ENCODE measurements at regions of chr16 and their contacts with region 1.

Region 1: DNA sequence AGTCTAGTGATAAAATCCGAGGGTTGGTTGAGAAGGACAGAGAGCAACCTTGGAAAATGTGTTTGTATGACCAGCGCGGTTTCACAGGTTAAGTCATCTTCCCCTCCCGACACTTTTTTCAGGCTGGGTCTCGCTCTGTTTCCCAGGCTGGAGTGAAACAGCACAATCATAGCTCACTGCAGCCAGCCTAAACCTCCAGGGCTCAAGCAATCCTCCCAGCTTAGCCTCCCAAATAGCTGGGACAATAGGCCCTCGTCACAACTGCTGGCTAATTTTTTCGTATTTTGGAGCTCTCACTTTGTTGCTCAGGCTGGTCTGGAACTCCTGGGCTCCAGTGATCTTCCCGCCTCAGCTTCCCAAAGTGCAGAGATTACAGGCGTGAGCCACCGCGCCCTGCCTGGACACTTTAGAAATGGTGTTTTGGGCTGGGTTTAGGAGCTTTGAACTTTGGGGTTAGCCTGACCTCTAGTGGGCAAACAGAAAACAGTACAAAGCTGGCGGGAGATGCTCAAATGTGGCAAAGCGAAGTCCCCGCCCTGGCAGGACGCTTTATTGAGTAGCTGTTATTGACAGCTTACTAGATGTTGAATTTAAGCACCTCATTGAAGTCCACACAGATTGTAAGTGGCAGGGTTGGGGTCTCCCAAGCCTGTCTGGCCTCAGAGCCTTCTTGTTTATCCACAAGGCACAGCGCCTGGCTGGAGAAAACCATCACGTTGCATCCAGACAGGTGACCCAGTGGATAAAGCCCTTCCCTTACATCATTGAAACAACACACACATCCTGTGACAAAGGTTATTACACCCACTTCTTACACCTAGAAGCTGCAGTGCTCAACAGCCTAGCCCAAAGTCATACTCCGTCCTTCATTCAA is 34.7 kb upstream of the RBBP6 start:
- DNase-seq: peak; percentile 50
- ATAC-seq: peak; percentile 92
- H3K4me3 ChIP-seq: no peak overlapping the region
- H3K27ac ChIP-seq: no peak overlapping the region
- H3K4me1 ChIP-seq: no peaks in the 10 kb centered on the region
- H3K27me3 ChIP-seq: peaks cover 3% of the 10 kb centered on the region; the same call in 1 of the 2 replicates
- CTCF ChIP-seq: peak; percentile 82
- POLR2A ChIP-seq: no peak
- RAD21 ChIP-seq: peak; percentile 77

Region 2: DNA sequence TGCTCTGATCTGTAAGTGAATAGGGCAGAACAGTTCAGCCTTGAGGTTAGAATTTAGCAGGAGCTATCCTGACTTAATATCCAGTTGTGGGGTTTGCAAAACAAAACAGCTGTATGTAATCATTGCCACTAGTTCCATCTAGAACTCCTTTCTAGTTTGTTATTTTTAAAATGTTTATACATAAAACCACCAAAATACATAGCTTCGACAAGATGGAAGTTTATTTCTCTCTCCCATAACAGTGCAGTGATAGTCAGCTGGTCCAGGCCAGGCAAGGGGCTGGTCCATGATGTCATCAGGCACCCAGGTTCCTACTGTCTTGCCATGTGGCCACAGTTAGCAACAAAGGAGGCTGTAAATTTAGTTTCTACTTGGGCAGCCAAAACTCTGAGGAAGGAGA is 836.5 kb before region 1 on chr16:
- CTCF ChIA-PET with region 1: no interaction called
- POLR2A ChIA-PET with region 1: no interaction called
- dilution Hi-C with region 1: no loop called
- in situ Hi-C with region 1: no loop called
- intact Hi-C with region 1: loop called (anchors 10 kb)
- DNase-seq: peak; percentile 91
- ATAC-seq: peak; percentile 86
- H3K4me3 ChIP-seq: no peak overlapping the region
- H3K27ac ChIP-seq: peak overlapping the region; percentile 89; the same call in 1 of the 2 replicates
- H3K4me1 ChIP-seq: peaks cover 29% of the 10 kb centered on the region
- H3K27me3 ChIP-seq: no peaks in the 10 kb centered on the region
- CTCF ChIP-seq: no peak
- POLR2A ChIP-seq: no peak
- RAD21 ChIP-seq: no peak

Region 3: DNA sequence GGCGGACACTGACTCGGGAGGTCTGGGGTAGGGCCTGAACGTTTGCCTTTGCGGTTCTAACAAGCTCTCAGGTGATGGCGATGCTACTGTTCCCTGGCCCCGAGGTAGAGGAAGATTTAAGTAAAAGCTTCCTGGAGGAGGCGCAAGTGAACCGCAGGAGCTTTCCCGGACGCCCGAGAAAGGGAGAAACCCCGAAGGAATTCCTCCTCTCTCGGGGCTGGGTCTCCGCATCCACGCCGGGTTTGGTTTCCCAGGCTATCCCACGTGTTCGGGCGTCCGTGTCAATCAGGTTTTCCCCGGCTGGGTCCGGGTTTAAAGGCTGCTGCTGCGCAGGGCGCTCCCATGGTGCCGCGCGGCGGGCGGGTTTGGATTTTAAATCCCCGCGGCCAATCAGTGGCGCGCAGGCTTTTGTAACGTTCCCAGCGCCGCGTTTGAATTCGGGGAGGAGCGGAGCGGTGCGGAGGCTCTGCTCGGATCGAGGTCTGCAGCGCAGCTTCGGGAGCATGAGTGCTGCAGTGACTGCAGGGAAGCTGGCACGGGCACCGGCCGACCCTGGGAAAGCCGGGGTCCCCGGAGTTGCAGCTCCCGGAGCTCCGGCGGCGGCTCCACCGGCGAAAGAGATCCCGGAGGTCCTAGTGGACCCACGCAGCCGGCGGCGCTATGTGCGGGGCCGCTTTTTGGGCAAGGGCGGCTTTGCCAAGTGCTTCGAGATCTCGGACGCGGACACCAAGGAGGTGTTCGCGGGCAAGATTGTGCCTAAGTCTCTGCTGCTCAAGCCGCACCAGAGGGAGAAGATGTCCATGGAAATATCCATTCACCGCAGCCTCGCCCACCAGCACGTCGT is 826.1 kb before region 1 on chr16 and contains the start of gene PLK1:
- CTCF ChIA-PET with region 1: no interaction called
- POLR2A ChIA-PET with region 1: no interaction called
- dilution Hi-C with region 1: no loop called
- in situ Hi-C with region 1: loop called (anchors 25 kb)
- intact Hi-C with region 1: no loop called
- DNase-seq: peak; percentile 76
- ATAC-seq: peak; percentile 93
- H3K4me3 ChIP-seq: peak within 1 kb of the TSS; percentile 50
- H3K27ac ChIP-seq: peak within 1 kb of the TSS; percentile 64
- H3K4me1 ChIP-seq: peaks cover 19% of the 10 kb centered on the region
- H3K27me3 ChIP-seq: no peaks in the 10 kb centered on the region
- CTCF ChIP-seq: peak; percentile 50
- POLR2A ChIP-seq: no peak
- RAD21 ChIP-seq: peak; percentile 44
- total RNA-seq, gene PLK1: 19.4 and 20.0 TPM in 2 replicates

Region 4: DNA sequence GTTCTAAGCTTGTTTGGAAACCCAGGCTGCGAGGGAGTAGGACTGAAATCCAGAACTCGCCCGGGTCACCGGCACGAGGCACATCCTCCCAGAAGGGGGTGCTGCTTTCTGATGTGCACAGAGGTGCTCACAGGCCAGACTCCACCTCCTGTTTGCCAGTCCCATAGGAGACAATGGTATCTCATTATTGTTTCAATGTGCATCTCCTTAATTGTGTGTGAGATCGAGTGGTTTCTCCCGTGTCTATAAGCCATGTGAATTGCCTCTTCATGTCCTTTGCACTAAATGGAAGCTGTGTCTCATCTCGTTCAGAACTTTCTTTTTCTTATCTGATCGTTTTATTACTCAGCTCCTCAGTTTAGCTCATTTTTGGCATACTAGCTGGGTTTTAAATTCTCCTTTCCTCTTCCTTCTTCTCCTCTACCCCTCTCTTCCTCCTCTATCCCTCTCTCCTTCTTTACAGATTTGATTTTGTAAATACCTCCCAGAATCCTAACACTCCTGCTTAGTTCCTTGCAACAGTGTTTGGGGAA is 701.1 kb before region 1 on chr16:
- CTCF ChIA-PET with region 1: interaction called, 6 read pairs
- POLR2A ChIA-PET with region 1: no interaction called
- dilution Hi-C with region 1: no loop called
- in situ Hi-C with region 1: loop called (anchors 10 kb)
- intact Hi-C with region 1: loop called (anchors 1 kb)
- DNase-seq: peak; percentile 8
- ATAC-seq: peak; percentile 86
- H3K4me3 ChIP-seq: no peak overlapping the region; the same call in 1 of the 2 replicates
- H3K27ac ChIP-seq: no peak overlapping the region
- H3K4me1 ChIP-seq: no peaks in the 10 kb centered on the region
- H3K27me3 ChIP-seq: no peaks in the 10 kb centered on the region
- CTCF ChIP-seq: peak; percentile 42
- POLR2A ChIP-seq: no peak
- RAD21 ChIP-seq: peak; percentile 36

Region 5: GRCh38 chr16:24041826-24042631 is 462.7 kb before region 1 on chr16:
- CTCF ChIA-PET with region 1: interaction called, 10 read pairs
- POLR2A ChIA-PET with region 1: no interaction called
- dilution Hi-C with region 1: no loop called
- in situ Hi-C with region 1: loop called (anchors 5 kb)
- intact Hi-C with region 1: loop called (anchors 1 kb)
- DNase-seq: peak; percentile 48
- ATAC-seq: peak; percentile 83
- H3K4me3 ChIP-seq: no peak overlapping the region
- H3K27ac ChIP-seq: no peak overlapping the region
- H3K4me1 ChIP-seq: no peaks in the 10 kb centered on the region
- H3K27me3 ChIP-seq: no peaks in the 10 kb centered on the region
- CTCF ChIP-seq: peak; percentile 79
- POLR2A ChIP-seq: no peak
- RAD21 ChIP-seq: peak; percentile 75

Region 6: DNA sequence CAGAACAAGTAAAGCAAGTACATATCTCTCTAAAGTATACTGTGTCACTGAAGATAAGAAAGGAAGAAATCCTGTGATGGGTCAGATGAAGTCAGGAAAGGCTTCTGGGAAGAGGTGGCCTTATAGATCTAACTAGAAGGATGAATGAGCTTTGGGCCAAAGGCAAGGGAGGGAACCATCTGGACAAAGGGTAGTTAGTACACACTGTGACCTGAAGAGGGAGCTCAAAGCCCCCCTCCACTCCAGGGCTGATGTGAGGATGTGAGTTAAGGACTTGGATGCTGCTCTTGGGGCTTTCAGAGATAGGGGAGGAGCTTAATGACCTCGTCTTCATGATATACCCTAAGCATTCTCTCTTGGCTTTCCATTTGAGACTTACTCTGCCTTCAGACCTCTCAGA is 433.9 kb before region 1 on chr16:
- CTCF ChIA-PET with region 1: interaction called, 12 read pairs
- POLR2A ChIA-PET with region 1: no interaction called
- dilution Hi-C with region 1: no loop called
- in situ Hi-C with region 1: no loop called
- intact Hi-C with region 1: loop called (anchors 1 kb)
- DNase-seq: peak; percentile 22
- ATAC-seq: peak; percentile 59; the same call in 1 of the 2 replicates
- H3K4me3 ChIP-seq: no peak overlapping the region
- H3K27ac ChIP-seq: no peak overlapping the region
- H3K4me1 ChIP-seq: no peaks in the 10 kb centered on the region
- H3K27me3 ChIP-seq: no peaks in the 10 kb centered on the region
- CTCF ChIP-seq: peak; percentile 47
- POLR2A ChIP-seq: no peak
- RAD21 ChIP-seq: peak; percentile 33

Region 7: GRCh38 chr16:24493859-24494258 is 10.8 kb before region 1 on chr16:
- CTCF ChIA-PET with region 1: no interaction called
- POLR2A ChIA-PET with region 1: no interaction called
- dilution Hi-C with region 1: no loop called
- in situ Hi-C with region 1: no loop called
- intact Hi-C with region 1: no loop called
- DNase-seq: no peak
- ATAC-seq: no peak
- H3K4me3 ChIP-seq: no peak overlapping the region
- H3K27ac ChIP-seq: no peak overlapping the region
- H3K4me1 ChIP-seq: no peaks in the 10 kb centered on the region
- H3K27me3 ChIP-seq: no peaks in the 10 kb centered on the region; the same call in 1 of the 2 replicates
- CTCF ChIP-seq: no peak
- POLR2A ChIP-seq: no peak
- RAD21 ChIP-seq: no peak

Region 8: DNA sequence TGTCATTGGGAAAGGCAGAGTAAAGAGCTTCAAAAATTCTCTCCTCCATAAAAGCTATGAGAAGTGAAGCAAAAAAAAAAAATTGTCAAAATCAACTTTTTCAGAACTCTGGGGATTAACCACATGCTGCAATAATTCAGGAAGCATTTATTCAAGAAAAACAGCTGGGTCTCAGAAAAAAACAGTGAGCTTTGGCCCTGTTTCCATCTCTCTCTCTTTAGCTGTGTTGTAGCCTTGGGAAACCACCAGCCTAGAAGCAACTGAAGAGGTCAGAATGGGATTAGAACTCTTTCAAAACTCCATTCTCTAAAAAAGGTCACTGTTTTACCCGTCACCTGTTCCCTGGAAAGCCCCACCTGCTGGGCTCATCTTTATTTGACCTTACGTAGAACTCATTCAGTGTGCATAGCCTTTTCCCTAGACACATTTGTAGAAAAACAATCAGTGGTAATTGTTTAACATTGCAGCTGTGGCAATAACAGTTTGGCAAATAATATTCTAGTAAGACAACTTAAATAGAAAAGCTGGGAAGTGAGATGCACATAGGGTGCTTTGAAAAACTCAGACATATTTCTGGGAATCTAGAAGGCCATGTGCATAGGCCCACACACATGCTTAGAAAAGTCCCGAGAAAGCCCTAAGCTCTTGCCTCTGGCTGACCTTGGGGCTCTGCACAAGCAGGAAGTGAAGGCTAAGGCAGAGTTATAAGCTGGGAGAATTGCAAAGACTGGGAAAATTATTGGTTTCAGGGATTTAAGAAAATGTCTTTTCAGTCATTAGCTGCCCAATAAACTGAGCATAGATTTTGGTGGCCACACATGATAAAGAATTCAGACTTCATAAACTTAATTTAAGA is 359.1 kb after region 1 on chr16:
- CTCF ChIA-PET with region 1: no interaction called
- POLR2A ChIA-PET with region 1: no interaction called
- dilution Hi-C with region 1: no loop called
- in situ Hi-C with region 1: no loop called
- intact Hi-C with region 1: no loop called
- DNase-seq: no peak
- ATAC-seq: no peak
- H3K4me3 ChIP-seq: no peak overlapping the region
- H3K27ac ChIP-seq: no peak overlapping the region
- H3K4me1 ChIP-seq: no peaks in the 10 kb centered on the region
- H3K27me3 ChIP-seq: peaks cover 5% of the 10 kb centered on the region
- CTCF ChIP-seq: no peak
- POLR2A ChIP-seq: no peak
- RAD21 ChIP-seq: no peak